ENCODE measurements at regions of chr6 and their contacts with region 1.

Region 1: DNA sequence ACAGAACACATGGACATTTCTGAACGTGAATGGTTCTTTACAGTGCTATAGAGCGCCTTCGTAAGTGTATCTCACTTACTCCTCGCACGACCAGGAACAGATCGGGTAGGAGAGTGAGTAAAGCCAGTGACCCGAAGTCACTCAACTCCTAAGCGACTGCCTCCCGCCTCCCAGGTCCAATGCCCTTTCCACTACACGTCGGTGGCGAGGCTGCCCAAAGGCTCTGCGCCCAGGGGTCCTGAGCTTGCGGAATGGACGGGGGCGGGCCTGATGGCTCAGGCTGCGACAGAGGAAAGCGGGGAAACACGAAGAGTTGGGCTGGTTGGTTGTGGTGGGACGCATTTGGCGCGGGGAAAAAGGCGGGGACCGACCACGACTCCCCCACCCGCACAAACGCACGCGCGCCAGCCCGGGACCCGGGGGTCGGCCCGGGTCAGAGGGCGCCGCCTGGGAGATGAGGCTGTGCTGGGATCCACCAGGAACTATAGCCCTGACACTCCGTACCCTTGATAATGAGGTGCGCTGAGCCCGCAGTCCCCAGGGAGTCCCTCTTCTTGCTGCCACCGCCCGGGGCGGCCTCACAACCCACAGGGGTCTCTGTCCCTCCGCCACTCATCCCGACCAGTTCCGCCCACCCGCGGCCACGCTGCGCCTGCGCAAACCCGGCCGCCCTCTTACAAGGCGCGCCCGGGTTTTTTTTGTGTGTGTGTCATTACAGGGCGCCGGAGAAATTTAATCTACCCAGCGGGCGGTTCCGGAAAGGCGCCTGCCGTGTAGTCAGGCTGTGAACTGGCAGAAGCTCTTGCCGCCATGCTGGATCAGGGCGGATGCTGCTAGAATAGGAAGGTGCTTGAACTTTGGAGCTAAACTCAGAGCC is at the start of gene BLOC1S5:
- DNase-seq: peak; percentile 94
- ATAC-seq: peak; percentile 84
- H3K4me3 Mint-ChIP-seq: peak within 1 kb of the TSS; percentile 93
- H3K27ac Mint-ChIP-seq: peak within 1 kb of the TSS; percentile 91
- H3K4me1 Mint-ChIP-seq: peaks cover 32% of the 10 kb centered on the region
- H3K27me3 Mint-ChIP-seq: no peaks in the 10 kb centered on the region
- CTCF ChIP-seq: no peak
- total RNA-seq, gene BLOC1S5: 15.6 to 18.9 TPM (median 17.9 TPM) in 3 replicates

Region 2: DNA sequence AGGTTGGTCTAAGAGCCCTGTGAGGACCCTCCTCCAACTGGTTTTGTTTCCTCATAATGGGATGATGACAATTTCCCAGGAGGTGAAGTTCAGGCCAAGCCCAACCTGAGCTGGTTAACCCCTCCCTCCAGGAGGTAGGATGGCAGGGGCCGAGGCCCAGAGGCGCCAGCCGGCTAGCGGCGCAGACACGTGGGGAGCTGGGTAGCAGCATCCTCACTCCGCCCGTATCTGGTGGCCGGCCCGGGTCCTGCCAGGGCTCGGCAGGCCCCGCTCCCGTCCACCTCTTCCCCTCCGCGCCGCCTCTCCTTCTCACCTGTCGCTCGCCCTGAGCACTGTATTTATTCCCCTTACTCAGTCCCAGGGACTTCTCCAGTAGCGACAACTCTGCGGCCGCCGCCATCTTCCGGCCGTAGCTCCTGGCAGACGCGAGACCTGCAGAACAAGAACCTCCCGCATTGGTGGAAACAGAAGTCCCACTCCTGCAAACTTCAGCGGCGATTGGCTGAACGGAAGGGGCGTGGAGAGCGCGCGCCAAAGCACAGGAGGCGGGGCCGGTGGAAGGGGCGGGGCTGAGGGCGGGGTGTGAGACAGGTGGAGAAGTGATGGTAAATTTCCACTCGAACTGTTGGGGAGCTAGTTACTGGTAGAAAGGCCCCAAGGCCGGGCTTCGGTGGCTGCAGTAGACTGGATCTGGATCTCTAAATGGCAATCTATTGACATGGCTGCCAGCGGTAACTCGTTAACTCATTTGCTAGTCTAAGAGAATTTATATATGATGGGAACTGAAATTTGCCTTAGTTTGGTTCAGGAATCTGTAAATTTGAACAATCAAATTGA is 38.3 kb after region 1 on chr6 and contains the start of gene EEF1E1:
- CTCF ChIA-PET with region 1: interaction called, 10 read pairs
- POLR2A ChIA-PET with region 1: interaction called, 9 read pairs
- DNase-seq: peak; percentile 97
- ATAC-seq: peak; percentile 96
- H3K4me3 Mint-ChIP-seq: peak within 1 kb of the TSS; percentile 98
- H3K27ac Mint-ChIP-seq: peak within 1 kb of the TSS; percentile 98
- H3K4me1 Mint-ChIP-seq: peaks cover 32% of the 10 kb centered on the region
- H3K27me3 Mint-ChIP-seq: no peaks in the 10 kb centered on the region
- CTCF ChIP-seq: no peak
- total RNA-seq, gene EEF1E1: 68.6 to 89.2 TPM (median 76.0 TPM) in 3 replicates

Measured in WTC11 (cell line).